Calu3 (cell line): ENCODE measurements at regions of chr7 and their contacts with region 1.

Region 1: GRCh38 chr7:138295049-138295637 is 164.9 kb upstream of the TRIM24 start:
- DNase-seq: no peak
- H3K4me3 Mint-ChIP-seq: no peak overlapping the region
- H3K27ac Mint-ChIP-seq: peak overlapping the region; percentile 36
- H3K4me1 Mint-ChIP-seq: peaks cover 22% of the 10 kb centered on the region
- H3K27me3 Mint-ChIP-seq: no peaks in the 10 kb centered on the region
- CTCF ChIP-seq: no peak

Region 2: DNA sequence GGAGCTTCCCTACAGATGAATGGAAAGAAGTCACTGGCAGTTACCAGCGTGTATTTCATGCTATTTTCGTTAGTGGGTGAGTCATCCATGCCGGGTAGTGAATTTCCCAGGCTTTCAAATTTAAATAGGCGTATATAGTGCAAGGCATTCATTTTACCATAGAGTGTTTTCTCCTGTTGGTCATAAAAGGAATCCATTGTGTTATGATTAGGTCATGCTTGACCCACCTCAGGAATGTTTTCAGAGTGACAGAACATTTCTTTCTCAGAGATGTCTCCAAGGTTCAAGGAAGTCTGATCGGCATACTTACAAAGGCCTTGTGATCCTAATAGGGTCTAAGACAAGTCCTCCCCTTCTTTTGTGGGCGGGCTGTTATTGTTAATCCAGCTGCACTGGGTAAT is 108.2 kb before region 1 on chr7:
- CTCF ChIA-PET with region 1: no interaction called
- intact Hi-C with region 1: loop called (anchors 10 kb)
- DNase-seq: peak; percentile 7
- H3K4me3 Mint-ChIP-seq: no peak overlapping the region
- H3K27ac Mint-ChIP-seq: peak overlapping the region; percentile 24
- H3K4me1 Mint-ChIP-seq: peaks cover 10% of the 10 kb centered on the region
- H3K27me3 Mint-ChIP-seq: no peaks in the 10 kb centered on the region
- CTCF ChIP-seq: no peak

Region 3: GRCh38 chr7:138565451-138566114 is 270.4 kb after region 1 on chr7:
- CTCF ChIA-PET with region 1: no interaction called
- intact Hi-C with region 1: loop called (anchors 10 kb)
- DNase-seq: no peak
- H3K4me3 Mint-ChIP-seq: peak overlapping the region; percentile 70
- H3K27ac Mint-ChIP-seq: peak overlapping the region; percentile 95
- H3K4me1 Mint-ChIP-seq: peaks cover 26% of the 10 kb centered on the region
- H3K27me3 Mint-ChIP-seq: no peaks in the 10 kb centered on the region
- CTCF ChIP-seq: no peak